HCT116 (cell line): ENCODE measurements at regions of chr2 and their contacts with region 1.

Region 1: DNA sequence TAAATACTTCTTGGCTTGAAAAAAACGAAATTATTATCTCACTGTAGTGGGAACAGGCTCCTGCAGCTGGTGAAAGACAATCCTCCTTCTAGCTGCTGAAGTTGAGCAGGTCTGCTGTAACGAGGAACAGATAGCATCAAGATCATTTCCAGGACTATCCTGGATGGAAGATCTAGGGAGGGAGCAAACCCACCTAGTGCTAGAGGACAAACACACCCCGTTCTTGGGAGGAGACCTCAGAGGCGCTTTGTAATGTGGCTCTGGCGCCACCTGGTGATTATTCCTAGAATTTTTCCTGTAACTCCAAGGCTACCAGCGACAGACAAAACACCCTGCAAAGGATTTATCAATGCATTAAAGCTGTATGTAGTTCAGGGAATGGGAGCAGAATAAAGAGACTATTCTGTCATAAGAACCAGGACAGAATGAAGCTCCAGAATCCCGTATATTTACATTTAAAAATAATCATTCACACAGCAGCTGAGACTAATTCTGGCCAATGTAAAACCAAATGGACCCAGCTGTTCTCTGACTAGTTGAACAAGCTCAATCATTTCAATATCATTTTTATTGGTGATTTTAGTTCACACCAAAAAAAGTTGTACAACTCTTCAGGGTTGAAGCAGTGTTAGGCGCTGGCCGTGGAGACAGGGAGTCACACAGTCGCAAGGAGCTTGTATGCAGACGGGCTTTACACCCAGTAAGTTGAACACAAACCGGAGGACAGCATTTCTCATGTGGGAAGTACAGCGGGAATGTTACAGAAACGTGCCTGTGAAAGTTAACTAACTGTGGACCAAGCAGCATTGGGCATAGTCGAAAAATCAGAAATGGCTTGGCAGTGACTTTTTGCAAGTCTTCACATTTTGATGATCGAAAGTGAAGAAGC is 290.3 kb downstream of the TRIB2 start:
- DNase-seq: peak; percentile 62
- ATAC-seq: peak; percentile 99
- H3K4me3 ChIP-seq: no peak overlapping the region
- H3K27ac ChIP-seq: no peak overlapping the region
- H3K4me1 ChIP-seq: peaks cover 0 to 3% of the 10 kb centered on the region in 2 experiments; a peak in 2 of 4 replicates
- H3K27me3 ChIP-seq: no peaks in the 10 kb centered on the region
- CTCF ChIP-seq: peak; percentile 61 to 84 (median 72); a peak in 5 of 6 replicates
- POLR2A ChIP-seq: no peak
- RAD21 ChIP-seq: peak; percentile 91

Region 2: DNA sequence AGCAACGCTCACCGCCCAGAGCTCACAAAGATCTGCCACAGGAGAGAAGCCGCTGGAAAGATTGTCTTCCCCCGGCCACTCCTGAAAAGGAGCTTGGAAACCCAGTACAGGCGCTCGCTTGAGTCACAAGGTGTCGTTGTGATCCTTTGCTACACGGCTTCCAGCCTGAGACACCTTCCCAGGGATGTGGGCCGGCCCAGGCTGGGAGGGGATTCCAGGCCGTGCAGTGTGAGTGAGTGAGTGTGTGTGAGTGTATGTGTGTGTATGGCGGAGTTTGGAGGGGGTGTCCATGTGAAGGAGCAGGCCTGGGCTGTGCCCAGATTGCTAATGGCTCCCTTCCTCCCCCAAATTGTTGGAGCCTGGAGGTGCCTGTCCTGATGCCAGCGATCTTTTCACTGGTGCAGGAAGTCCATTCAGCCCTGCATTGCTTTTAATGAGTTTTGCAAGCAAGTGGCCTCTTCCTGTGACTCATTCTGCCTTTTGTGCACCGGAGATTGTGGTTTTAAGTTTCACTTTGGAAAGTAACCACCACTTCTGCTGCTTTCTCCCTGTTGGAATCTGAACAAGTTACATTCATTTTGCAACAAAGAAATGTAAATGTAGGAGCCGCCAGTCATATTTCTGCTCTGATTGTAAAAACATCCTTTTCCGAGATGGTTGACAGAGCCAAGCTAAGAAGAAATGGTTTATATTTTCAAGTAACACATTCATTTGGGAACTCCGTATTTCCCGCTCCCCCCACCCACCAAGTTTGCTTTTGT is 1176.9 kb before region 1 on chr2:
- CTCF ChIA-PET with region 1: interaction called, 25 read pairs
- POLR2A ChIA-PET with region 1: no interaction called
- RAD21 ChIA-PET with region 1: interaction called, 3 read pairs
- intact Hi-C with region 1: loop called (anchors 1 kb)
- DNase-seq: peak; percentile 90
- ATAC-seq: peak; percentile 95
- H3K4me3 ChIP-seq: peak overlapping the region; percentile 33 to 50
- H3K27ac ChIP-seq: peak overlapping the region; percentile 96
- H3K4me1 ChIP-seq: peaks cover 27 to 31% of the 10 kb centered on the region in 2 experiments
- H3K27me3 ChIP-seq: no peaks in the 10 kb centered on the region
- CTCF ChIP-seq: peak; percentile 42 to 62 (median 57); a peak in 5 of 6 replicates
- POLR2A ChIP-seq: peak; percentile 35
- RAD21 ChIP-seq: peak; percentile 90

Region 3: DNA sequence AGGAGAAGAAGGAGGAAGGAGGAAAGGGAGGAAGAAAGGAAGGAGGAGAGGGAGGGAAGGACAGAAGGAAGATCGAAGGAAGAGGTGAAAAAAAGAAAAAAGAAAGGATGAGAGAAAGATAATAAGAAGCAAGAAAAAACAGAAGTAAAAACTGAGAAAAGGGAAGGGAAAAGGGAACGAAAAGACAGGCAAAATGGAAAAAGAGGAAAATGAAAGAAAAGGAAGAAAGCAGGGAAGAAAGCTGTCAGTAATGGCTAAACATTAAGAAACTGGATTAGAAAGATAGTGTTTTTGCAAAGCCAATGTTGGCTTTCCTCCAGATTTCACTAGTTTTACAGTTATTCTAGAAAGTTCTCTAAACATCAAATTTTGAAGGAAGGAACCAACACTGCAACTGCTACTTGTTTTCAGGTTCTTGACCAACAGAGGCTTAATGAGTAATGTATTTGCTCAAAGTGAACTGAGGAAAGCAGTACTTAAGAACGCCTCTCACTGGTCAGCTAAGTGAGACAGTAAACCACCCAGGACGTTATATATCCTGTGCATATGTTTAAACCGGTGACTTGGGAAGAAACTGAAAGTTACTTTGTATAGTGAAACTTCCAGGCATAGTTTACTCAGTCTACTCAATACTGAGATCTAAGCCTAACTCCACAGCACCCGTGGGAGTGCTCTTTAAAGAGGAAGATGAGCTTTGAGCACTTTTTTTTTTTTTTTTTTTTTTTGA is 576.5 kb before region 1 on chr2:
- CTCF ChIA-PET with region 1: interaction called, 9 read pairs
- POLR2A ChIA-PET with region 1: no interaction called
- RAD21 ChIA-PET with region 1: interaction called, 3 to 4 read pairs
- intact Hi-C with region 1: loop called (anchors 5 kb)
- DNase-seq: no peak
- ATAC-seq: no peak
- H3K4me3 ChIP-seq: no peak overlapping the region
- H3K27ac ChIP-seq: no peak overlapping the region
- H3K4me1 ChIP-seq: no peaks in the 10 kb centered on the region
- H3K27me3 ChIP-seq: no peaks in the 10 kb centered on the region
- CTCF ChIP-seq: no peak
- POLR2A ChIP-seq: no peak
- RAD21 ChIP-seq: no peak

Region 4: GRCh38 chr2:12884713-12885282 is 122.3 kb before region 1 on chr2:
- CTCF ChIA-PET with region 1: no interaction called
- POLR2A ChIA-PET with region 1: no interaction called
- RAD21 ChIA-PET with region 1: no interaction called
- intact Hi-C with region 1: loop called (anchors 5 kb)
- DNase-seq: peak; percentile 18
- ATAC-seq: peak; percentile 67
- H3K4me3 ChIP-seq: peak overlapping the region in 1 of 2 experiments; percentile 10; a peak in 1 of 4 replicates
- H3K27ac ChIP-seq: no peak overlapping the region
- H3K4me1 ChIP-seq: peaks cover 5 to 23% of the 10 kb centered on the region in 2 experiments; a peak in 3 of 4 replicates
- H3K27me3 ChIP-seq: no peaks in the 10 kb centered on the region
- CTCF ChIP-seq: no peak
- POLR2A ChIP-seq: no peak
- RAD21 ChIP-seq: peak; percentile 5; the same call in 1 of the 2 replicates